T-cell (primary cell): ENCODE measurements at regions of chr1 and their contacts with region 1.

Region 1: GRCh38 chr1:100366209-100366525 is 13.9 kb downstream of the CDC14A start:
- DNase-seq: no peak
- ATAC-seq: no peak
- H3K4me3 ChIP-seq: no peak overlapping the region
- H3K4me3 Mint-ChIP-seq: peak overlapping the region in 1 of 3 donors; percentile 24
- H3K27ac ChIP-seq: no peak overlapping the region
- H3K27ac Mint-ChIP-seq: peak overlapping the region; percentile 16 to 66
- H3K4me1 ChIP-seq: peaks cover 6 to 36% of the 10 kb centered on the region in 2 experiments
- H3K4me1 Mint-ChIP-seq: peaks cover 79 to 82% (median 82%) of the 10 kb centered on the region in 3 donors
- H3K27me3 ChIP-seq: no peaks in the 10 kb centered on the region
- H3K27me3 Mint-ChIP-seq: no peaks in the 10 kb centered on the region

Region 2: DNA sequence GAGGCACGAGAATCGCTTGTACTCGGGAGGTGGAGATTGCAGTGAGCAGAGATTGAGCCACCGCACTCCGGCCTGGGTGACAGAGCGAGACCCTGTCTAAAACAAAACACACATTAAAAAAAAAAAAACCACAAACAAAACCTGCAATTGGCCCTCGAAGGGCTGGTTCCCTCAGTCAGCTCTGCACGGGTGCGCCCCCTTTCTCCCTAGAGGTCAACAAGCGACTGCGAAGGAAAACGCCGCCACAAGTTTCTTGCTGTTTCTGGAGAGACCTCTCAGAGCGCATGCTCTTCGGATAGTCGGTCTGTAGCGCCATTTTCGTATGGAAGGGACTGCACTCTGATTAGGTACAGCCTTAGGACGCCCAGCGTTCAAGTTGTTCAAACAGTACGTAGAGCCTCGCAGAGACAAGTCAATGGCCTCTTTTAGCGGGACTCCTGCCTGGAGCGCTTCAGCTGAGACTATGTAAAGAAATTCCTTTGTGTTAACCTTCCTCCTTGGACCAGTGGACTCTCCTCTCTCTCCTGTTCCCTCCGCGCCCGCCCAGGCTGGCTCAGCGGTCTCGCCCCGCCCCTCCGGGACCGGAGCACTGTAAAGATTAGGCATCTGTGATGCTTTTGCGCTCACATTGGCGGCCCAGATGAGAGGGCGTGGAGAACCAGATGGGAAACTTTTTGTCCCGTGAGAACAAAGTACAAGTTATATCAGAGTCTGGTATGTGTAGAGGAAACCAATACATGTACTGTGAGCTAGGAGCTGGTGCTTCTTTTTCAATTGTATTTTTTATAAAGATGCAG is 14.9 kb before region 1 on chr1:
- CTCF ChIA-PET with region 1: interaction called, 3 to 14 read pairs
- POLR2A ChIA-PET with region 1: interaction called, 6 to 15 read pairs
- DNase-seq: peak; percentile 71 to 92 (median 85)
- ATAC-seq: peak; percentile 66 to 79 (median 70)
- H3K4me3 ChIP-seq: peak overlapping the region; percentile 67 to 96
- H3K4me3 Mint-ChIP-seq: peak overlapping the region; percentile 90 to 100 (median 96)
- H3K27ac ChIP-seq: peak overlapping the region; percentile 87
- H3K27ac Mint-ChIP-seq: peak overlapping the region; percentile 95 to 98
- H3K4me1 ChIP-seq: peaks cover 16 to 22% of the 10 kb centered on the region in 2 experiments
- H3K4me1 Mint-ChIP-seq: peaks cover 27 to 39% (median 30%) of the 10 kb centered on the region in 3 donors
- H3K27me3 ChIP-seq: no peaks in the 10 kb centered on the region
- H3K27me3 Mint-ChIP-seq: no peaks in the 10 kb centered on the region